ENCODE measurements at regions of chr10 and their contacts with region 1.

Region 1: DNA sequence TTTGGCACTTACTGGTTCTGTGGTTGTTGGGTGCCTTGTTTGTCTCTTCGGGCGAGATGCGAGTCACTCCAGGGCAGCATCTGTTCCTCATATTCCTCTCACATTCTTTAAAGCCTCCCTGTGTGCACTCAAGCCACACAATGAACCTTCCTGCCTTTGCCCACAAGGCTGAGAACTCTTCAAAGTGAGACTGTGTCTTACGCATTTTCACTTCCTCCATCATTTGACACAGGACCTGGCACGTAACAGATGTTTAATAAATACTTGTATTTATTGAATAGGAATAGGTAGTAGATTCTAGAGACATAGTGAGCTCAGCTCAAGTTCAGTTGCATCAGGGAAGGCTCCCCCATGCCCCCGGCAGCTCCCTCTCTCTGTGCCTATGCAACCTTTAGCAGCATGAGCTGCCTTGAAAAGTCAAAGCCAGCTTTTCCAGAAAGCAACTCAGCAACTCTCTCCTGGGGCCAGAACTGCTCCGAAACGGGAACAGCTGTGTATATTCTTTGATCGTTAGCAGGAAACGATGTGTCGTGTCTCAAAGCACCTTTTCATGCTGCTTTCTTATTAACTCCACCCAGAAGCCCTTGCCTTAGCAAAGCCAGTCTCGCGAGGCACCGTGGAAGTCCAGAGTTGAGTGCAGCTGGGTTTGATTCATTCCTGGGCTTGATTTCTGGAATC is 97.5 kb downstream of the PFKFB3 start:
- DNase-seq: no peak
- ATAC-seq: peak in 6 of 8 donors; percentile 37 to 77 (median 70)
- H3K4me3 ChIP-seq: no peak overlapping the region
- H3K27ac ChIP-seq: peak overlapping the region in 3 of 10 donors; percentile 21 to 77 (median 26)
- H3K4me1 ChIP-seq: peaks cover 0 to 54% (median 0%) of the 10 kb centered on the region in 9 donors
- H3K27me3 ChIP-seq: no peaks in the 10 kb centered on the region
- CTCF ChIP-seq: no peak

Region 2: GRCh38 chr10:6239213-6239991 is 60.8 kb before region 1 on chr10:
- intact Hi-C with region 1: no loop called
- DNase-seq: peak in 1 of 2 donors; percentile 50
- ATAC-seq: peak; percentile 46 to 92 (median 78)
- H3K4me3 ChIP-seq: no peak overlapping the region
- H3K27ac ChIP-seq: peak overlapping the region in 3 of 10 donors; percentile 11 to 19 (median 12)
- H3K4me1 ChIP-seq: peaks cover 0 to 27% (median 0%) of the 10 kb centered on the region in 9 donors
- H3K27me3 ChIP-seq: no peaks in the 10 kb centered on the region
- CTCF ChIP-seq: no peak

Region 3: GRCh38 chr10:6321880-6322279 is 21.6 kb after region 1 on chr10:
- intact Hi-C with region 1: no loop called
- DNase-seq: no peak
- ATAC-seq: no peak
- H3K4me3 ChIP-seq: no peak overlapping the region
- H3K27ac ChIP-seq: peak overlapping the region in 1 of 10 donors; percentile 17
- H3K4me1 ChIP-seq: peaks cover 0 to 11% (median 0%) of the 10 kb centered on the region in 9 donors
- H3K27me3 ChIP-seq: no peaks in the 10 kb centered on the region
- CTCF ChIP-seq: no peak

Region 4: DNA sequence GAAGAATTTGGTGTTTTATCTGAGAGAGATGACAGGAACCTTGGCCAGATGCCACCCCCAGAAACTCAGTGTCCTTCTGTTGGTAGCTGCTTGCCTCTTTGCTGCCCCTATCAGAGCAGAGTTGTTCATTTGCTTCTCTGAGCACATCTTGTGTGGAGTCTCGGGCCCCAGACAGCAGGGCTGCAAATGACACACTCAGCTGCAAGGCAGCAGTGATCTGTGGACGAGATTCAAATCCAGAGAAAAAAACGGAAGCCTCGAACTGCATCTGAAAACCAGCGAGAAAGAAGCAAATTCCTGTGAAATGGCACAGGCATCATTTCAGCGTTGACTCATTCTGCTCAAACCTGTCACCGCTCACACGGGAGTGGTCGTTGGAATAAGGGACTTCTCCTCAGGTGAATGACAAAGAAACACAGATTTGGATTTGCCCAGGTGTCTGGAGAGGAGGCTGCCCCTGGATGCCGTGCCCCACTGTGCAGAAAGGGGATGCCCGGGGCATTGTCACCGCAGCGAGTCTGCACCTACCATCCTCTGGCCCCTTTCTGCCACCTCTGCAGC is 47.2 kb after region 1 on chr10:
- intact Hi-C with region 1: loop called in 1 of 10 experiments (anchors 1 kb)
- DNase-seq: no peak
- ATAC-seq: peak in 1 of 8 donors; percentile 19
- H3K4me3 ChIP-seq: peak overlapping the region in 1 of 10 donors; percentile 14
- H3K27ac ChIP-seq: peak overlapping the region in 1 of 10 donors; percentile 83
- H3K4me1 ChIP-seq: peaks cover 0 to 28% (median 0%) of the 10 kb centered on the region in 9 donors
- H3K27me3 ChIP-seq: no peaks in the 10 kb centered on the region
- CTCF ChIP-seq: no peak

Region 5: GRCh38 chr10:6382081-6382480 is 81.8 kb after region 1 on chr10:
- intact Hi-C with region 1: loop called in 1 of 10 experiments (anchors 10 kb)
- DNase-seq: peak in 1 of 2 donors; percentile 28
- ATAC-seq: peak in 7 of 8 donors; percentile 28 to 73 (median 60)
- H3K4me3 ChIP-seq: peak overlapping the region in 1 of 10 donors; percentile 5
- H3K27ac ChIP-seq: peak overlapping the region in 6 of 10 donors; percentile 35 to 75 (median 63)
- H3K4me1 ChIP-seq: peaks cover 0 to 36% (median 0%) of the 10 kb centered on the region in 9 donors
- H3K27me3 ChIP-seq: no peaks in the 10 kb centered on the region
- CTCF ChIP-seq: no peak